A549 (cell line): ENCODE measurements at regions of chr7 and their contacts with region 1.

Region 1: GRCh38 chr7:29408841-29409243 is 154.8 kb upstream of the PRR15 start:
- DNase-seq: peak; percentile 58 to 71
- ATAC-seq: peak; percentile 79 to 86; a peak in 5 of 6 replicates
- H3K4me3 ChIP-seq: no peak overlapping the region
- H3K27ac ChIP-seq: no peak overlapping the region
- H3K4me1 ChIP-seq: 0 out of 3 replicates have a peak, but pooled peaks cover 5% of the 10 kb centered on the region
- CTCF ChIP-seq: peak; percentile 89
- EP300 ChIP-seq: no peak
- POLR2A ChIP-seq: no peak
- RAD21 ChIP-seq: peak; percentile 90 to 92

Region 2: GRCh38 chr7:28926871-28927597 is 481.8 kb before region 1 on chr7:
- CTCF ChIA-PET with region 1: interaction called, 295 read pairs
- POLR2A ChIA-PET with region 1: no interaction called
- DNase-seq: peak; percentile 68 to 81
- ATAC-seq: peak; percentile 91 to 93
- H3K4me3 ChIP-seq: peak overlapping the region; percentile 53
- H3K27ac ChIP-seq: peak overlapping the region; percentile 47 to 52; a peak in 5 of 6 replicates
- H3K4me1 ChIP-seq: 0 out of 3 replicates have a peak, but pooled peaks cover 2% of the 10 kb centered on the region
- CTCF ChIP-seq: peak; percentile 87
- EP300 ChIP-seq: no peak
- POLR2A ChIP-seq: no peak
- RAD21 ChIP-seq: peak; percentile 64 to 69

Region 3: GRCh38 chr7:29091715-29092114 is 317.1 kb before region 1 on chr7:
- CTCF ChIA-PET with region 1: interaction called, 10 read pairs
- POLR2A ChIA-PET with region 1: no interaction called
- DNase-seq: peak in 1 of 2 experiments; percentile 10
- ATAC-seq: no peak
- H3K4me3 ChIP-seq: no peak overlapping the region
- H3K27ac ChIP-seq: no peak overlapping the region
- H3K4me1 ChIP-seq: no peaks in the 10 kb centered on the region
- CTCF ChIP-seq: no peak
- EP300 ChIP-seq: no peak
- POLR2A ChIP-seq: no peak
- RAD21 ChIP-seq: no peak

Region 4: GRCh38 chr7:29113384-29114103 is 295.3 kb before region 1 on chr7:
- CTCF ChIA-PET with region 1: interaction called, 31 read pairs
- POLR2A ChIA-PET with region 1: no interaction called
- DNase-seq: peak; percentile 15
- ATAC-seq: peak; percentile 69 to 71; a peak in 3 of 6 replicates
- H3K4me3 ChIP-seq: no peak overlapping the region
- H3K27ac ChIP-seq: no peak overlapping the region
- H3K4me1 ChIP-seq: no peaks in the 10 kb centered on the region
- CTCF ChIP-seq: peak; percentile 47
- EP300 ChIP-seq: no peak
- POLR2A ChIP-seq: no peak
- RAD21 ChIP-seq: peak; percentile 44 to 49; a peak in 3 of 5 replicates

Region 5: GRCh38 chr7:29370531-29371314 is 38.1 kb before region 1 on chr7:
- CTCF ChIA-PET with region 1: no interaction called
- POLR2A ChIA-PET with region 1: no interaction called
- DNase-seq: no peak
- ATAC-seq: no peak
- H3K4me3 ChIP-seq: no peak overlapping the region
- H3K27ac ChIP-seq: no peak overlapping the region
- H3K4me1 ChIP-seq: no peaks in the 10 kb centered on the region
- CTCF ChIP-seq: no peak
- EP300 ChIP-seq: no peak
- POLR2A ChIP-seq: no peak
- RAD21 ChIP-seq: no peak

Region 6: GRCh38 chr7:29386196-29386765 is 22.6 kb before region 1 on chr7:
- CTCF ChIA-PET with region 1: interaction called, 11 read pairs
- POLR2A ChIA-PET with region 1: no interaction called
- DNase-seq: no peak
- ATAC-seq: no peak
- H3K4me3 ChIP-seq: no peak overlapping the region
- H3K27ac ChIP-seq: no peak overlapping the region
- H3K4me1 ChIP-seq: no peaks in the 10 kb centered on the region
- CTCF ChIP-seq: no peak
- EP300 ChIP-seq: no peak
- POLR2A ChIP-seq: no peak
- RAD21 ChIP-seq: no peak

Region 7: GRCh38 chr7:29421010-29421956 is 12.4 kb after region 1 on chr7:
- CTCF ChIA-PET with region 1: interaction called, 20 read pairs
- POLR2A ChIA-PET with region 1: no interaction called
- DNase-seq: no peak
- ATAC-seq: no peak
- H3K4me3 ChIP-seq: no peak overlapping the region
- H3K27ac ChIP-seq: no peak overlapping the region
- H3K4me1 ChIP-seq: no peaks in the 10 kb centered on the region
- CTCF ChIP-seq: no peak
- EP300 ChIP-seq: no peak
- POLR2A ChIP-seq: no peak
- RAD21 ChIP-seq: no peak

Region 8: DNA sequence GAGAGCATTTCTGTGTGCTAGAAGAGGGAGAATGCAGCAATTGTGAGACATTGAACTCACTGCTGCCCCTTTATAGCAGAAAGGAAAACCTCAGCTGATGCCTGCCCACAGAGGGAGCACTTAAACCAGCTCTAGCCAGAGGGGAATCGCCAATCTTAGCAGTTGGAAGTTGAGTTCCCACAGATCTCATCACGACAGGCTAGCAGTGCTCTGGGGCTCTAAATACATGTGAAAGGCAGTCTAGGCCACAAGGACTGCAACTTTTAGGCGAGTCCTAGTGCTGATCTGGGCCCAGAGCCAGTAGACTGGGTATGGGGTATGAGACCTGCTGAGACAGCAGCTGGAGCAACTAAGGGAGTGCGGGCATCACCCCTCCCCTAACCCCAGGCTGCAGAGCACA is 129.5 kb after region 1 on chr7:
- CTCF ChIA-PET with region 1: no interaction called
- POLR2A ChIA-PET with region 1: no interaction called
- DNase-seq: no peak
- ATAC-seq: no peak
- H3K4me3 ChIP-seq: no peak overlapping the region
- H3K27ac ChIP-seq: no peak overlapping the region
- H3K4me1 ChIP-seq: no peaks in the 10 kb centered on the region
- CTCF ChIP-seq: no peak
- EP300 ChIP-seq: no peak
- POLR2A ChIP-seq: no peak
- RAD21 ChIP-seq: 0 out of 5 replicates have a peak, but pooled peaks of 1 of the 2 experiments have one; percentile 7